Dendritic cell treated with granulocyte-macrophage colony-stimulating factor and Interleukin-4, amounts not matched to agents 40 ng/mL and 50 ng/mL, for 4 days (primary cell): ENCODE measurements at regions of chr1 and their contacts with region 1.

Region 1: DNA sequence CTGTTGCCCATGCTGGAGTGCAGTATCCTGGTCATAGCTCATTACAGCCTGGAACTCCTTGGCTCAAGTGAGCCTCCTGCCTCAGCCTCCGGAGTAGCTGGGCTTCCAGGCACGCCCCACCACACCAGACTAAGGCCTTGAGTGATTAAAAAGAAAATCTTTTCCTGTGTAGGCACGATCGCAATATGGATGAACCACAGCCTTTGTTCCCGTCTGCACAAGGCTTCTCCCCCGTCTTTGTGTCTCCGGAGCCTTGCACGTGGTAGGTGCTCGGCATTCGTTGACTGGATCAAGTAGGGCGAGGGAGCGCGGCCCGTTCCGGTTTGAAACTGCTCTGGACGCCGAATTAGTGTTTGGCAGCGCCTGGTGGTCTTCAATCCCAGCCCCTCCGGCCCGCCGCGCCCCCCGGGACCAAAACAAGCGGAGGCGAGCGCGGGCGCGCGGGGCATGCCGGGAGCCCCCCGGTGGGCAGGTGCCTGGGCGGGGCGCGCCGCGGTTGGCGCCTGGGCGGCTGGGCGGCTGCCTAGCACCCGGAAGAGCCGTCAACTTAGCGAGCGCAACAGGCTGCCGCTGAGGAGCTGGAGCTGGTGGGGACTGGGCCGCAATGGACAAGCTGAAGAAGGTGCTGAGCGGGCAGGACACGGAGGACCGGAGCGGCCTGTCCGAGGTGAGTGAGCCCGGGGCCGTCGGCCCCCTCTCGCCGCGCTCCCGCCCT is at the start of gene SFT2D2:
- H3K4me3 Mint-ChIP-seq: peak within 1 kb of the TSS; percentile 89
- H3K27ac Mint-ChIP-seq: peak within 1 kb of the TSS; percentile 92
- H3K4me1 Mint-ChIP-seq: peaks cover 55% of the 10 kb centered on the region
- H3K27me3 Mint-ChIP-seq: no peaks in the 10 kb centered on the region

Region 2: GRCh38 chr1:168082008-168082876 is 143.4 kb before region 1 on chr1:
- intact Hi-C with region 1: loop called (anchors 5 kb)
- H3K4me3 Mint-ChIP-seq: no peak overlapping the region
- H3K27ac Mint-ChIP-seq: peak overlapping the region; percentile 76
- H3K4me1 Mint-ChIP-seq: peaks cover 29% of the 10 kb centered on the region
- H3K27me3 Mint-ChIP-seq: no peaks in the 10 kb centered on the region

Region 3: GRCh38 chr1:168178638-168179437 is 46.8 kb before region 1 on chr1 and contains the start of gene TIPRL:
- intact Hi-C with region 1: loop called (anchors 2 kb)
- H3K4me3 Mint-ChIP-seq: no peak within 1 kb of the TSS
- H3K27ac Mint-ChIP-seq: no peak within 1 kb of the TSS
- H3K4me1 Mint-ChIP-seq: no peaks in the 10 kb centered on the region
- H3K27me3 Mint-ChIP-seq: peaks cover 6% of the 10 kb centered on the region